ENCODE measurements at regions of chr2 and their contacts with region 1.

Region 1: GRCh38 chr2:9813312-9814133 is 29.8 kb upstream of the TAF1B start:
- DNase-seq: peak; percentile 96
- H3K4me3 ChIP-seq: peak overlapping the region in 1 of 2 experiments; percentile 4; a peak in 1 of 4 replicates
- H3K27ac ChIP-seq: no peak overlapping the region
- H3K4me1 ChIP-seq: peaks cover 0 to 10% of the 10 kb centered on the region in 2 experiments; a peak in 1 of 4 replicates
- H3K27me3 ChIP-seq: no peaks in the 10 kb centered on the region
- CTCF ChIP-seq: peak; percentile 98
- EP300 ChIP-seq: no peak
- RAD21 ChIP-seq: peak; percentile 91

Region 2: DNA sequence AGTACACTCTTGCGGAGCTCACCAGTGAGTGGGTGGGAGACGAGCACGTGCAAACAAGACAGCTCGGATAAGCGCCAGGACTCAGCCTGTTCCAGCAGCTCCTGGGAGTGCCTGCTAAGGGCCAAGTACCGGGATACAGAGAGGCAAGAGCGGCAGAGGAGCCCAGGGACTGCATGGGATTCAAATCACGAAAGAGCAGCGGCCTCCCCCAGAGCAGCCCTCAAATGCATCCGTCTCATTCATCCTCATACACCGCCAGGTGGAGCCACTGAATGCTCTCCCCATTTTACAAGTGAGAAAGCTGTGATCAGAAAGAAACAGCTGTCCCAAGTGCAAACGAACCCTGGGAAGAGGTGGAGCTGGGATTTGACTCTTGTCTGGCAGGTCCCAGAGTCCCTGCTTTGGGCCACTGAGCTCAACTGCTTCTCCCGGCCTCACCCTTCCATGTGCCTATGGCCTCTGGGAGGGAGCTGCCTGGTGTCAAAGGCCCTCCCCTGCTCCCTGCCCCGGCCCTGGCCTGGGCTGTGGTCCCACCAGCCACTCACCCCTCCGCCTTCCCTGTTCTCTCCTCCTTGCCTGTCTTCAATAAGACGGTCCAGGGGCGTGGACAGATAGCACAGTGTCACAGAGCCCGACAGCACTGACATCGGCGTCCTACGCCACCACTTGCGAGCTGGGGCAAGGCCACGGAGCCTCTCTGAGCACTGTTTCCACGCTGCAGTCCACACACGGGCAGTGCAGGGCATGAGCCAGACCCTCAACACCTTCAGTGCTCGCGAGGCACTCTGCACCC is 43.0 kb before region 1 on chr2:
- CTCF ChIA-PET with region 1: interaction called, 10 read pairs
- POLR2A ChIA-PET with region 1: interaction called, 3 read pairs
- DNase-seq: peak; percentile 79
- H3K4me3 ChIP-seq: no peak overlapping the region
- H3K27ac ChIP-seq: peak overlapping the region in 1 of 2 experiments; percentile 28; a peak in 1 of 4 replicates
- H3K4me1 ChIP-seq: peaks cover 5 to 32% of the 10 kb centered on the region in 2 experiments; a peak in 2 of 4 replicates
- H3K27me3 ChIP-seq: no peaks in the 10 kb centered on the region
- CTCF ChIP-seq: peak; percentile 73
- EP300 ChIP-seq: no peak
- RAD21 ChIP-seq: peak; percentile 57

Region 3: GRCh38 chr2:9830690-9831410 is 17.3 kb after region 1 on chr2:
- CTCF ChIA-PET with region 1: interaction called, 62 read pairs
- POLR2A ChIA-PET with region 1: no interaction called
- DNase-seq: no peak
- H3K4me3 ChIP-seq: no peak overlapping the region
- H3K27ac ChIP-seq: no peak overlapping the region
- H3K4me1 ChIP-seq: peaks cover 0 to 2% of the 10 kb centered on the region in 2 experiments; a peak in 1 of 4 replicates
- H3K27me3 ChIP-seq: no peaks in the 10 kb centered on the region; the same call in 1 of the 2 replicates
- CTCF ChIP-seq: no peak
- EP300 ChIP-seq: no peak
- RAD21 ChIP-seq: no peak

Region 4: DNA sequence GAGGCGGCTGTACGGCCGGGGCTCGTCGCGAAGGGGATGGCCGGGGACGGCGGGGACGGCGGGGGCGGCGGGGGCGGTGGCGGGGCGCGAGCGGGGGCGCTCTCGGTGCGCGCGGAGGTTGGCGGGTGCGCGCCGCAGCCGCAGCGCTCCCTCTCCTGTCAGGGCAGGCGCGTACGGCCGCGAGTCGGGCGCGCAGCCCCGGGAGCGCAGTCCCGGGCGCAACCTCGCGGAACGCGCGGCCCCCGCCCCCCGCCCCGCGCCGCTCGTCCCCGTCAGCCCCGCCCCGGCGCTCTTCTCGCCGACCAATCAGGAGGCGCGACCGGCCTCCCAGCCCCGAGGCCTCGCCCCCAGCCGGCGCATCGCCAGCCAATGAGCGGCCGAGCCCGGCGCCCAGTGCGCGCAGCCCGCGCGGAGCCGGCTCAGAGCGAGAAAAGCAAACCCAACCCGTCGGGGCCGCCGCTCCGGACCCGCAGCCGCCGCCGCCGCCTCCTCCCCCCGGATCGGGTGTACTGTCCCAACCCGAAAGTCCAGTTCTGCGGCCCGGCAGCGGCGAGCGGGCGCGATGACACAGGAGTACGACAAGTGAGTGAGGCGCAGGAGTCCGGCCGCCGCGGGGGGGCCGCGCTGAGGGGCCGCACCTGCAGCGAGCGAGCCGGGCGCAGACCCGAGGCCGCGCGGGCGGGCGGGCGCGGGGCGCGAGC is 137.9 kb after region 1 on chr2 and contains the start of gene GRHL1:
- CTCF ChIA-PET with region 1: interaction called, 18 read pairs
- POLR2A ChIA-PET with region 1: no interaction called
- DNase-seq: peak; percentile 100
- H3K4me3 ChIP-seq: peak within 1 kb of the TSS; percentile 71
- H3K27ac ChIP-seq: no peak within 1 kb of the TSS
- H3K4me1 ChIP-seq: peaks cover 0 to 7% of the 10 kb centered on the region in 2 experiments; a peak in 2 of 4 replicates
- H3K27me3 ChIP-seq: no peaks in the 10 kb centered on the region
- CTCF ChIP-seq: no peak
- EP300 ChIP-seq: no peak
- RAD21 ChIP-seq: no peak
- polyA plus RNA-seq, gene GRHL1: 1.0 and 1.6 TPM in 2 replicates

Region 5: DNA sequence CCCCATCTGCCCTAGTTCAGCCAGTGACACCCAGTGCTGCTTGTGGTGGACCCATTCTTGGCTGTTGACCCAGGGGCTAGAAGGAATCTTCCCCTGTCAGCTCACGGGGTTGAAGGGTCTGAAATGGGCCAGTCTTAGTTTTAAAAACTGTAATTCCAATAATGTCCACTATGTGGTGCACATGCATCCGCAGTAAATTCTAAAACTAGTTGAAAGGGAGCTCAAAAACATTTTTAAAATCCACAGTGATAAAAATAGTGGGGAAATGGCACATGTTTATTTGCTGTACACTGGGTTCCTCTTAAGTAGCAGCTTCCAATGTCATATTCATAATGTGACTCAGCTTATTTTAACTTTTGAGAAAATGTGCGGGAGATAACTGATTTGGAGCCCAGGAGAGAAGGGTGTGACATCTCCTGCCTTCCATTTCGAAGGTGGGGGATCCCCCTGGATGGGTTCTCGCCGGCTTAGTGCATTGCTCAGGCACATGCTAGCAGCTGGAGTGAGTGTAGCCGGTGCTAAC is 170.8 kb after region 1 on chr2:
- CTCF ChIA-PET with region 1: interaction called, 94 read pairs
- POLR2A ChIA-PET with region 1: no interaction called
- DNase-seq: peak; percentile 78
- H3K4me3 ChIP-seq: no peak overlapping the region
- H3K27ac ChIP-seq: no peak overlapping the region
- H3K4me1 ChIP-seq: peaks cover 22 to 25% of the 10 kb centered on the region in 2 experiments
- H3K27me3 ChIP-seq: no peaks in the 10 kb centered on the region
- CTCF ChIP-seq: peak; percentile 93
- EP300 ChIP-seq: no peak
- RAD21 ChIP-seq: peak; percentile 89

Region 6: GRCh38 chr2:10043906-10044601 is 230.5 kb after region 1 on chr2:
- CTCF ChIA-PET with region 1: interaction called, 257 read pairs
- POLR2A ChIA-PET with region 1: no interaction called
- DNase-seq: peak; percentile 98
- H3K4me3 ChIP-seq: peak overlapping the region; percentile 59 to 68
- H3K27ac ChIP-seq: peak overlapping the region; percentile 58 to 77; a peak in 2 of 4 replicates
- H3K4me1 ChIP-seq: peaks cover 6 to 22% of the 10 kb centered on the region in 2 experiments; a peak in 1 of 4 replicates
- H3K27me3 ChIP-seq: no peaks in the 10 kb centered on the region
- CTCF ChIP-seq: no peak
- EP300 ChIP-seq: no peak
- RAD21 ChIP-seq: no peak

Region 7: GRCh38 chr2:10097352-10098148 is 284.0 kb after region 1 on chr2:
- CTCF ChIA-PET with region 1: interaction called, 14 read pairs
- POLR2A ChIA-PET with region 1: no interaction called
- DNase-seq: peak; percentile 91
- H3K4me3 ChIP-seq: no peak overlapping the region
- H3K27ac ChIP-seq: no peak overlapping the region
- H3K4me1 ChIP-seq: peaks cover 0 to 13% of the 10 kb centered on the region in 2 experiments; a peak in 1 of 4 replicates
- H3K27me3 ChIP-seq: no peaks in the 10 kb centered on the region
- CTCF ChIP-seq: peak; percentile 96
- EP300 ChIP-seq: no peak
- RAD21 ChIP-seq: peak; percentile 83